ENCODE measurements at regions of chr3 and their contacts with region 1.

Region 1: DNA sequence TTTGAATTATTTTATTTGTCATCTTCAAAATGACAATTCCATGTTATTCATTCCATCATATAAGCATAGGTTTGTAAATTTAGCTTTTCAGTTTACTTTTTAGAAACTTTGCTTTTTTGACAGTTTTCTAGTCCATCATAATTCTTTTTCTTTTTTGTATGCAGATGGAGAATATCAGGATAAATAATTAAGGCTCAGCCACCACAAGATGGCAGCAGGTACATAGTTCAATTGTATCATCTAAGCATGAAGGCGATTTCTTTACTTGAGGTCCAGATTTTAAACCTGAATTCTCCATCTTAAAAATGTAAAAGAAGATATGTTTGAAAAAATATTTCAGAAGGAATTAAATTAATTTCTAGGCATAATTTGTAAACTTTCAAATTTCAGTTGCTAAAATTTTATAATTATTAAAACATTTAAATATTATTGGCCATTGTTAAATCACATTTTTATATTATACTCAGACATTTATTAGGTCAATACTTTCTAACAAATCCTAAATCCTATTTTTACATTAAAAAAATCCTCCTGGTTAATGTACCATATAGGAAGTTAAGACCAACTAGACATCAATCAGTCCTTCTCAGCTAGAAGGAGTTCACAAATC is 15.1 kb downstream of the PLSCR5 start:
- DNase-seq: peak; percentile 29
- H3K4me3 ChIP-seq: no peak overlapping the region
- H3K27ac ChIP-seq: no peak overlapping the region
- H3K4me1 ChIP-seq: no peaks in the 10 kb centered on the region
- H3K27me3 ChIP-seq: no peaks in the 10 kb centered on the region
- CTCF ChIP-seq: peak; percentile 42

Region 2: DNA sequence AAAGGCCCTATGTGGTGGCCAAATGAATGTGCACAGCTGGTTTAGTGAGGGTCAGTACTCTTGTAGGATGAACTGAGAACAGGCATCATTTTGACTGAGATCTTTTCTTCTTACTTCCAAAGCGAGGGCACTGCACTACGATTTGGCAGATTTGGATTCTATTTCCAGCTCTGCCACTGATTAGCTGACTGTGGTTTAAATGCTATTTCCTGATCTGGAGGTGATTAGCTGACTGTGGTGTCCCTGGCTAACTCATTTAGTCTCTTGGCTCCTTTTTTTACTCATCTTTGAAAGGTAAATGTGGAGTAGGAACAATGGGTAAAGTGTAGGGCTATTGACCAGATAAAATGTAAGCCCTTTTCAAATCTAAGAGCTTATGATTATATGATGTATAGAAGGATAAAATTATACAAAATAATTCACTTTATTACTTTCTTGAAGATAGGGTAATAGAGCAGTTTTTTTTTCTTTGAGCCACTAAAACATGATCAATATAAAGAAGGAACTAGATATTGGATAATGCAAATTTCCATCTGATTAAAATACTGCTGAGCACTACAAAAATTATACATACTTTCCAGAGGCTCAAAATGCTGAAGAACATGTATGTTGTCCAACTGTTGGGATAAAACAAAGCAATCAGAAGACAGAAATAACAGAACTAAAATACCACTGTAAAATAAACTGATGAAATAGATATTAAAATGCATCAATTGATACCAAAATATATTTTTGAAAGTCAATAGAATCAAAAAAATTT is 389.4 kb before region 1 on chr3:
- intact Hi-C with region 1: loop called (anchors 10 kb)
- DNase-seq: no peak
- H3K4me3 ChIP-seq: no peak overlapping the region
- H3K27ac ChIP-seq: no peak overlapping the region
- H3K4me1 ChIP-seq: no peaks in the 10 kb centered on the region
- H3K27me3 ChIP-seq: no peaks in the 10 kb centered on the region
- CTCF ChIP-seq: no peak

Region 3: GRCh38 chr3:146638718-146639117 is 48.7 kb after region 1 on chr3:
- intact Hi-C with region 1: loop called (anchors 5 kb)
- DNase-seq: no peak
- H3K4me3 ChIP-seq: no peak overlapping the region
- H3K27ac ChIP-seq: no peak overlapping the region
- H3K4me1 ChIP-seq: no peaks in the 10 kb centered on the region
- H3K27me3 ChIP-seq: no peaks in the 10 kb centered on the region
- CTCF ChIP-seq: no peak